AG04449 (cell line): ENCODE measurements at regions of chr15 and their contacts with region 1.

Region 1: DNA sequence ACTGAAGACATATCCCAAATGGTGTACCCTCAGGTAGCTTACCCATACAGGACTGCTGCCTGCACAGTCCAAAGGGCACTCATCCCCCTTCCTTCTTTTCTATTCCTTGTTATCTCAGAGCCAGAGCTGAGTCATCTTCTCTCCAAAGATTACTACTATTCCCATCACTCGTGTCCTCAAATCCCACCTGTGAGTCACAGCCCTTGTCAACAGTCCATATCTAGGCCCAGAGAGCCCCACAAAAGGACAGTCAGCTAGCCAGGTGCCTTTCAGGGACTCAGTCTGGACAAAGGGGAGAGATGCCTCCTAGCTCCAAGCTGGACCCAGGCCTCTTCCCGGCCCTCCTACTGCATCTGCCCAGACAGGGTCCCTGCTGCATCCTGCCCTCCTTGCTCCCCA is 11.0 kb downstream of the PARP16 start:
- DNase-seq: no peak
- H3K4me3 ChIP-seq: no peak overlapping the region
- CTCF ChIP-seq: no peak

Region 2: DNA sequence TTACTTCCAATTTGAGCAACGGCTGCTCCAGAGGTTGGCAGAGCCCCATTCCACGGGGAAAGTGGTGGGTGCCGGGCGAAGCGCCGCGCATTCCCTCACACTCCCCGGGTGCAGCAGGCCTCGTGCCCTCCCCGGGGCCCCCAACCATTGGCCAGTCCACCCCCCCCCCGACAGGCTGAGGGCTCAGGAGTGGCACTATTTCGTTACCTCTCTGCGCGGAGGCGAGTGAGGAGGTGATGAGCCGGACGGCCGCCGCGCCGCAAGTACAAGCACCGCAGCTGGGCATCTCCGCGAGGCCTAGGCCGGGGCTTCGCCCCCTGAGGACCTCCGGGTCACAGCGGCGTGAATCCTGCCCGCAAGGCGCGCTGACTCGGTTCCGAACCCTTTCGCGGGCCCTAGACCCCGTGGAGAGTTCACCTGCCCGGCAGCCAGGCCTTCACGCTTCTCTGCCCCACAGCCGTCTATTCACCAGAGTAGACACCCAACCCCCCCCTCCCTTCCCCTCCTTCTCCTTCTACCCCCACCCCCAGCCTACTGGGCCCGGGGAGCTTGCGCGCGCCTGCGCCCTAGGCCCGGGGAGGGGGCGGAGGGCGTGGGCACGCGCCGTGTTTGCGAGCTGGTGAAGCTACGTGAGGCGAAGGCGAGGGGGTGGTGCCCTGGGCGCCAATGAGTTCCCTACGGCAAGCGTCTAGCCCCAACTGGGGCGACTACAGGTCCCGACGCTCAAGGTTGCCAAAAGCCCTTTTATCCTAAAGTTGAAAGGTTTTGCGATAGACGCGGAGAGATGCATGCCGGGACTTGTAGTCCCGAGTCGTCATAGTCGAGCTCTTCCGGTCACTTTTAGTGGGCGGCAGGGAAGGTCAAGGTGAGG is 90.6 kb before region 1 on chr15 and contains the start of gene CLPX:
- CTCF ChIA-PET with region 1: interaction called, 208 read pairs
- POLR2A ChIA-PET with region 1: no interaction called
- DNase-seq: peak; percentile 41
- H3K4me3 ChIP-seq: peak within 1 kb of the TSS; percentile 91
- CTCF ChIP-seq: no peak

Region 3: GRCh38 chr15:65209701-65210618 is 65.8 kb before region 1 on chr15:
- CTCF ChIA-PET with region 1: interaction called, 18 read pairs
- POLR2A ChIA-PET with region 1: no interaction called
- DNase-seq: no peak
- H3K4me3 ChIP-seq: no peak overlapping the region
- CTCF ChIP-seq: no peak

Region 4: DNA sequence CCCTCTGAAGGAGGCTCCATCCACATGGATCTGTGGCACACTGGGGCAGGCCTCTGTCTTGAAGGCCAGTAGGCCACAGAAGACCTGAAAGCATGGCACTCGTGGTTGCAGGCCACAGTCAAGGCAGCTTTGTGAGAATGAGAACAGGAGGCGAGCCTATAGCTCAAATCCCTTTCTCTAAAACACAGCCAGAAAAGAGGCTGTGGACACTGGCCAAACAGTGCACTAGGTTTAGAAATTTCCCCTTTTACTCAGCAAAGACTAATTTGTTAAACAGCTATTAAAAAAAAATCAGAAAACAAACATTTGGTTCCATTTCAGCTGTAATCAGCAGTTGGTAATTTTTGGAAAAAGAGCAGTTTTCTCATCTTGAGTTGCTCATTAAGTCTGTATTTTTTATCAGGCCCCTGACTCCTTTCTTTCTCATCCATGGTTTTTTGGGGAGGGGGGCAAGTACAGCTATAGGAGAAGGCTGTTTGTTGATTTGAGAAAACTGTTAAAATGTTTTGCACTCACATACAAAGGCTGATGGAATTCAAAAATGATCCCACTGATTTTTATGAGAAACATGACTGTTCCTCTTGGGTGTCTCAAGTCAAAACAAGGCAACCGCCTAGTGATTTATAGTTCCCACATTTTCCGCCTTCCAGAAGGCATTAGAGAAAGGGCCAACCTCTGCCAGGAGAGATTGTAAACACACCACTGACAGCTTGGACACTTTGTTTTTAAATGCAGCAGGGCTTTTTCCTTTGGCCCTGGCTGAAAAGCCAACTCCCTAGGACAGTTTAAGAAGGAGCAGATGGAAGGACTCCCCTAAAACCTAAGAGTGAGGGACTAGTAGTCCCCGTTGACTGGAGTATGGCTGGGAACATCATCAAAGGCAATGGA is 17.1 kb before region 1 on chr15:
- CTCF ChIA-PET with region 1: interaction called, 49 read pairs
- POLR2A ChIA-PET with region 1: no interaction called
- DNase-seq: no peak
- H3K4me3 ChIP-seq: no peak overlapping the region
- CTCF ChIP-seq: no peak

Region 5: DNA sequence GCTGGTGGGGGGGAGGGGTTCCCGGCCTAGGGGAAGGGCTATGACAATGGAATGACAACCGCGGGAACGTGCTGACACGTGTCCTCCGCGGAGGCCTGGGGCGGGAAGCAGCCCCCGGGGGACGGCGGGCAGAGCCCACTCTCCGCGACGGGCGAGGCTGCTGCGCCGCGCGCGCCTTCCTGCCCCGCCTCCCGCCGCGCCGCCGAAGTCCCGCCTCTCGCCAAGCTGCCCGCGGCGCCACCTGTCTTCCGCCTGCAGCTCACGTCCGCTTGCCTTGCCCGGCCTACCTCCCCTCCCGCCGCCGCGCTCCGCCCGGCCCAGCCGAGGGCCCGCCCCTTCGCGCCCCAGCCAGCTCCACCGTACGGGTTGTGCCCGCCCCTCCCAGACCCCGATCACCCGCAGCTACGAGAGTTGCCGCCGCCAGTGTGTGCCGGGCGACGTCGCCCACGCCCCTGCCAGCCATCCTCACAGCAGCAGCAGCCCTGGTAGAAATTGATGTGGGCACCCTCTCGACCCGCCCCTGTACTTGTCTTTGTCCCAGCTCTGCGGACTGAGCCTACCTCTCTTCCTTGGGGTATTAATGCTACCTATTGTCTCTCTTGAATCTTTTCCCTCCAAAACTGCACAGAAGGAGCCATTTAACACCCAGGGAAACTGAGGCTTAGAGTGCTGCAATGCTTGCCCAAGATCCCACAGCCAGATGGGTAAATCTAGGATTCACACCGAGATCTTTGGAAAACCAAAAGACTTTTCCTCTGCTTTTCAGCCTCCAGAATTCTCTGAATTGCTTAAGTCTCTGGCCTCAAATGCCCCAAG is 11.2 kb after region 1 on chr15 and contains the start of gene PARP16:
- CTCF ChIA-PET with region 1: interaction called, 97 read pairs
- POLR2A ChIA-PET with region 1: interaction called, 4 read pairs
- DNase-seq: no peak
- H3K4me3 ChIP-seq: peak within 1 kb of the TSS; percentile 69
- CTCF ChIP-seq: peak; percentile 49

Region 6: DNA sequence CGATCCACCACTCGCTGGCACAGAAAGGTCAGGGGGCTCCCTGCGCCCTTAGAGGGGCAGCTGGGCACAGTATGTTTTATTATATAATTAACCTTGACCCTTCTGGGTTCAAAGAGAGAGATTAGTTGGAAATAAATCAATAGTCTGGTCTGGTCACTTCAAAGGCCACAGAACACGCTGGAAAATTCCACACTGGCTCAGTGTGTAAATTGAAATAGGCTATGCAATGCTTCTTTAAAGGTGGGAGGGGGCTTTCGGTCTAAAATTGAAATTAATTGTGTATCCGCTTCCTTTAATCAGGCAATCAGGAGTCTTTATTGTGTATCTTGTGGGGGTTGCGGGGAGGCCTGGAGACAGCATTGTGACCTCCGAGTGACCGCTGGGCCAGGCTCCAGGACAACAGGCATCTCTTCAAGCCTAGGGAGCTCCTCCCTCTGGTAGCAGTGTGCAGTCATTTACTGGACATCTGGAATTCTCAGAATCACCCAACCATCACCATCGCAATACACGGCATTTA is 36.7 kb after region 1 on chr15:
- CTCF ChIA-PET with region 1: no interaction called
- POLR2A ChIA-PET with region 1: no interaction called
- DNase-seq: no peak
- H3K4me3 ChIP-seq: no peak overlapping the region
- CTCF ChIP-seq: no peak